PC-3 (cell line): ENCODE measurements at regions of chr6 and their contacts with region 1.

Region 1: DNA sequence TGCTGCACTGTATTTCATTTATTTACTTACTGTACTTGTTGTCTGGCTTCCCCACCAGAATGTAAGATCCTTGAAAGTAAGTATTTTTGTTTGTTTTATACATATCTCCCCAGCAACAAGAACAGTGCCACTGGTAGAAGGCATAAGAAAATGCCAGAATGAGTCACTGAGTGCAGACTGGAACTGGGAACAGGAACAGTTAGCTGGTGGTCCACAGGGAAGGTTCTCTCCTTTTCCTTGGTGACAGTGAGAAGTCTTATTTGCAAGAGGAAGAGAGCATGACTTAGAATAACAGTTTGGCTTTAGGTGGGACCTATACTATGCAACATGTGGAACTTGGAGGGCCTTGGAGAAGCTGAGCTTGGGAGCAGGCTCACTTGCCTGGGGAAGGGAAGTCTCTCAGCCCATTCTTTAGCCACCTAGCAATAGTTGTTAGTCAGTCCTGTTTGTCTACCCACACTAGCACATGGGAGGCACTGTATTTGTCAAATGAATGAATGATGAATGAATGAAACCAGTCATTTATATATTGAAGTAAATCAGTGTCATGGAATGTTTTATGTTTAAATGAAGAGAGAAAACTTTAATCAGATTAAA is 203.5 kb downstream of the KCNQ5 start:
- DNase-seq: peak; percentile 42
- ATAC-seq: peak; percentile 19; the same call in 1 of the 2 replicates
- H3K4me3 ChIP-seq: no peak overlapping the region
- H3K27ac ChIP-seq: peak overlapping the region; percentile 85
- H3K4me1 ChIP-seq: peaks cover 34% of the 10 kb centered on the region
- H3K27me3 ChIP-seq: no peaks in the 10 kb centered on the region
- CTCF ChIP-seq: no peak

Region 2: DNA sequence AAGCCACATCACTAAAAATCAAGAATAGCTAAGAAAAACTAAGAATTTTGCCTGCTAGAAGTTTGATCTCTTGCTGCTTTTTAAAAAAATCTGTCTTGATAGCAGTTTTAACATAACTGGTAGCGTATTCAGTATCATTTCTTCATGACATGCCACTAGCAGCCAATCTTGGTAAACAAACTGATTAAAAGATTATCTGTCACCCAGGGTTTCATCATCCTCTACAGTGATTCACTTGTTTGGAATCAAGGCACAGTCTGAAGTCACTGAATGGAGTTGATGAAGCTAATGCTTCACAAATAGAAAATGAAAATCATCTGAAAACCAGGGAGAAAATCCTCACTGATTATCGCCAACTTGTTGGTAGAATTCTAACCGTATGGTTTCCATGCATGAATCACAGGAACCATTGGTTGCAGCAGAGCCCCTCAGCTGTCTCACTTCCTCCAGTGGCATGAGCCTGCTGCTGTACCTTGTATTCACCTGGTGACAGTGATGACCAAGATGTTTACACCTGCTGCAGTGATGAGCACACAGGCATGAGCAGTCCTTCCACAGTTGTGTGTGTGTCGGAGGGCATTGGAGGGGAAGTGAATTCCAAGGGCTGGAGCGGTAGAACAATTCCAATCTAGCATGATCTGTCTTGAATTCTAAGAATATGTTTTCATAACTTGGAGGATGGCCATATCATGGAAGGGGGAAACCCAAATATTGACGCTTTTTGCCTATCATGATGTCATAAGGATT is 124.9 kb after region 1 on chr6:
- CTCF ChIA-PET with region 1: no interaction called
- POLR2A ChIA-PET with region 1: no interaction called
- intact Hi-C with region 1: loop called (anchors 5 kb)
- DNase-seq: peak; percentile 81
- ATAC-seq: peak; percentile 63
- H3K4me3 ChIP-seq: no peak overlapping the region
- H3K27ac ChIP-seq: peak overlapping the region; percentile 52
- H3K4me1 ChIP-seq: peaks cover 42% of the 10 kb centered on the region
- H3K27me3 ChIP-seq: no peaks in the 10 kb centered on the region
- CTCF ChIP-seq: no peak